Esophagus squamous epithelium (tissue), 5 donors: ENCODE measurements at regions of chr12 and their contacts with region 1.

Region 1: GRCh38 chr12:46896680-46897079 is 70.9 kb upstream of the SLC38A4 start:
- DNase-seq: no peak
- H3K4me3 ChIP-seq: no peak overlapping the region
- H3K27ac ChIP-seq: no peak overlapping the region
- H3K4me1 ChIP-seq: peaks cover 0 to 5% (median 0%) of the 10 kb centered on the region in 3 donors
- H3K27me3 ChIP-seq: no peaks in the 10 kb centered on the region
- CTCF ChIP-seq: no peak
- POLR2A ChIP-seq: no peak

Region 2: GRCh38 chr12:46811185-46811584 is 85.5 kb before region 1 on chr12:
- intact Hi-C with region 1: no loop called
- DNase-seq: no peak
- H3K4me3 ChIP-seq: no peak overlapping the region
- H3K27ac ChIP-seq: no peak overlapping the region
- H3K4me1 ChIP-seq: peaks cover 0 to 5% (median 0%) of the 10 kb centered on the region in 3 donors
- H3K27me3 ChIP-seq: no peaks in the 10 kb centered on the region
- CTCF ChIP-seq: no peak
- POLR2A ChIP-seq: no peak

Region 3: DNA sequence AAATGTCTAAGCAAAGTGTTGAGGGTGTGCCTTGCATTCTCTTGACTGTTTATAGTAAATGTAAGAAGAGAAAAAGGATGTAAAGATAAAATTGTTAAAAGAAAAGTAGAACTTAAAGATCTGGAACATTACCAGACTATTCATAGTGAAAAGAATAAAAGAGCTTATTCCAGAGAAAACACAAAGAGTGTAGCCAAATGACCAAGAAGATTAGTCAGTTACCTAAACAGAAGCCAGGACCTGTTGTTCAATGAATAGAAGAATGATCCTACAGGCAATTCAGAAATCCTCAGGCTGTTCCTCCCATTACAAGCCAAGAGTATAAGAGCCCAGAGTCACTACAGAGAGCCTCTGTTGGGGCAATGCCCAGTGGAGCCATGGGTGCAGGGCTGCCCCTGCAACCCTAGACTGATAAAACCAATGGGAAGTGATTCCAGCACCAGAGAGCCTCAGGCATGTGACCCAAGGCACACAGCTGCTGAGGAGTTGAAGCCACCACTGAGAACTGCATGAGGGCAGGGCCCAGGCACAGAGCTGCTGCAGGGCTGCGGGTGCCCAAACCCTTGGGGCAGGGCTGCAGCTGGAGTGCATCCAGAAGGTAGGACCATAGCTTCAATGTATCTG is 20.2 kb after region 1 on chr12:
- intact Hi-C with region 1: loop called (anchors 1 kb)
- DNase-seq: no peak
- H3K4me3 ChIP-seq: no peak overlapping the region
- H3K27ac ChIP-seq: peak overlapping the region in 2 of 4 donors; percentile 19 to 59
- H3K4me1 ChIP-seq: peaks cover 6 to 38% (median 14%) of the 10 kb centered on the region in 3 donors
- H3K27me3 ChIP-seq: no peaks in the 10 kb centered on the region
- CTCF ChIP-seq: no peak
- POLR2A ChIP-seq: no peak